ENCODE measurements at regions of chrX and their contacts with region 1.

Region 1: DNA sequence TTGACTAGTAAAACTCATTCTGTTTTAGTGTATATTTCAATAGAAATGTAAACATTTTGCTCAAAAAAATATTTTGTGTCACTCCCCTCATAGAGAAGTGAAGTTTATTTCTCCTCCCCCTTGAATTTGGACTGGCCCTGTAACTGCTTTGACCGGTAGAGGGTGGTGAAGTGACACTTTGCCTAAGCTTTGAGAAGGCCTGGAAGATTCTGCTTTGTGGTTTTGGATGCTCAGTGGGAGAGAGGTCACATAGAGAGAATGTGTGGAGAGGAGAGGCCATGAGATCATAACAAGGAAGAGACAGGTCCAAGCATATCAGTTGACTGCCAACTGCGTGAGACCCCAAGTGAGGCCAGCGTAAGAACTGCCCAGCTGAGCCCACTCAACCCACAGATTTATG is 19.1 kb upstream of the ARX start:
- DNase-seq: no peak
- H3K4me3 ChIP-seq: no peak overlapping the region
- H3K4me3 Mint-ChIP-seq: no peak overlapping the region
- H3K27ac Mint-ChIP-seq: no peak overlapping the region
- H3K4me1 ChIP-seq: no peaks in the 10 kb centered on the region
- H3K4me1 Mint-ChIP-seq: no peaks in the 10 kb centered on the region
- H3K27me3 ChIP-seq: no peaks in the 10 kb centered on the region
- H3K27me3 Mint-ChIP-seq: peaks cover 4% of the 10 kb centered on the region
- CTCF ChIP-seq: peak in 1 of 2 experiments; percentile 32

Region 2: GRCh38 chrX:24169211-24169610 is 865.7 kb before region 1 on chrX:
- CTCF ChIA-PET with region 1: no interaction called
- POLR2A ChIA-PET with region 1: no interaction called
- intact Hi-C with region 1: no loop called
- DNase-seq: no peak
- H3K4me3 ChIP-seq: no peak overlapping the region
- H3K4me3 Mint-ChIP-seq: no peak overlapping the region
- H3K27ac Mint-ChIP-seq: peak overlapping the region; percentile 68
- H3K4me1 ChIP-seq: no peaks in the 10 kb centered on the region
- H3K4me1 Mint-ChIP-seq: peaks cover 34% of the 10 kb centered on the region
- H3K27me3 ChIP-seq: no peaks in the 10 kb centered on the region
- H3K27me3 Mint-ChIP-seq: no peaks in the 10 kb centered on the region
- CTCF ChIP-seq: no peak

Region 3: DNA sequence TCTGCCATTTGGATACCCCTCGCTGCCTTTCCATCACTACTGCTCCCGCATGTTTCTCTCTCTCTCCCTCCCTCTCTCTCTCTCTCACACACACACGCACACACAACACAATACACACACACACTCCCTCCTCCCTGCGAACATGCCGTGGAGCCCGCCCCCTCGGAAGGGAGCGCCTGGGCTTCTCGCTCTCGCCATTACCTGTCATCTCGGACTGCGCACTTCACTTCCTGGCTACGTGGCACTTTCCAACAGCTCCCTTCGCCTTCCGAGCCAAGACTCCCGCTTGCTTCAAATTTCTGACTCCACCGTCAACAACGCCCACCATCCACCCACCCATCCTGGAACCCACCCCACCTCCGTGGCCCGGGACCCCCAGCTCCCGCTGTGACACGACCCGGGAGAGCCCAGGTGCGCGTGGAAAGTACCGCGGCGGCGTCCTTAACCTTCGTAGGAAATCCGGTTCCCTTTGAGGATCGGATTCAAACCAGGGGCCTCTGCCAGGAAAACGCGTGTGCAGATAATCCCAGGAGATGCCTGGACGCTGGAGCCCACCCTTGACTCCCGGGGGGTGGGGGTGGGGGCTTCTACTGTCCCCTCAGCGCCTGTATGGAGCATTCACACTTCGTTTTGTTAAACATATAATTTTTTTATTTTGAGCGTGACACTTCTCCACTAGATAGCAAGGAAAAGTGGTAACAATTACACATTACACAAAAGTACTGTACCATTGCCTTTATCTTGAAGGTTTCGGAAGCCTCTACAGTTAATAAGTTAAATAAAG is 31.6 kb before region 1 on chrX:
- CTCF ChIA-PET with region 1: no interaction called
- POLR2A ChIA-PET with region 1: no interaction called
- intact Hi-C with region 1: loop called (anchors 1 kb)
- DNase-seq: no peak
- H3K4me3 ChIP-seq: no peak overlapping the region
- H3K4me3 Mint-ChIP-seq: no peak overlapping the region
- H3K27ac Mint-ChIP-seq: no peak overlapping the region
- H3K4me1 ChIP-seq: no peaks in the 10 kb centered on the region
- H3K4me1 Mint-ChIP-seq: no peaks in the 10 kb centered on the region
- H3K27me3 ChIP-seq: no peaks in the 10 kb centered on the region
- H3K27me3 Mint-ChIP-seq: peaks cover 6% of the 10 kb centered on the region
- CTCF ChIP-seq: no peak

Region 4: DNA sequence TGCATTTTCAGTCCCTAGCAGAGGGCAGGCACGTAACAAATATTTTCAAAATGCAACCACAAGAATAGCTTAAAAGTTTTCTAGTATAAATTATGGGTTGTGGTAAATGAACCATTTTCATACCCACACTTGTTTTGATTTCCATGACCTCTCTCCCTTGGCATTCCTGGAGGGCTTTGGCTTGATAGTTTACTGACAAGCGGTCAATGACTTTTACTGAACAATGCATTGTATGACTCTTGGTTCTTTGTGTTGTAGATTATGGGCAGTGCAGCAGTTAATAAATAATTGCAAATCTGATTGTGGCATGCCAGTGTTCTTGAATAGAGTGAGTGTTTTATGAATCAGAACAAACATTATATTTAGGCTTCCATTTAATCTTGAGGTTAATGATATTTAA is 266.1 kb after region 1 on chrX:
- CTCF ChIA-PET with region 1: no interaction called
- POLR2A ChIA-PET with region 1: no interaction called
- intact Hi-C with region 1: no loop called
- DNase-seq: no peak
- H3K4me3 ChIP-seq: no peak overlapping the region
- H3K4me3 Mint-ChIP-seq: no peak overlapping the region
- H3K27ac Mint-ChIP-seq: no peak overlapping the region
- H3K4me1 ChIP-seq: no peaks in the 10 kb centered on the region
- H3K4me1 Mint-ChIP-seq: no peaks in the 10 kb centered on the region
- H3K27me3 ChIP-seq: no peaks in the 10 kb centered on the region
- H3K27me3 Mint-ChIP-seq: no peaks in the 10 kb centered on the region
- CTCF ChIP-seq: no peak

Measured in Caco-2 (cell line).